ENCODE measurements at regions of chr1 and their contacts with region 1.

Region 1: GRCh38 chr1:43529206-43529731 is 1.4 kb upstream of the PTPRF start:
- DNase-seq: peak; percentile 75
- H3K4me3 ChIP-seq: no peak overlapping the region
- H3K27ac ChIP-seq: no peak overlapping the region
- H3K4me1 ChIP-seq: peaks cover 24% of the 10 kb centered on the region
- H3K27me3 ChIP-seq: no peaks in the 10 kb centered on the region
- CTCF ChIP-seq: peak; percentile 93 to 98

Region 2: GRCh38 chr1:43454266-43455011 is 74.8 kb before region 1 on chr1:
- CTCF ChIA-PET with region 1: no interaction called
- dilution Hi-C with region 1: no loop called
- in situ Hi-C with region 1: no loop called
- intact Hi-C with region 1: loop called (anchors 2 kb)
- DNase-seq: peak; percentile 26
- H3K4me3 ChIP-seq: peak overlapping the region; percentile 49 to 54 (median 50)
- H3K27ac ChIP-seq: peak overlapping the region; percentile 48
- H3K4me1 ChIP-seq: peaks cover 20% of the 10 kb centered on the region
- H3K27me3 ChIP-seq: no peaks in the 10 kb centered on the region
- CTCF ChIP-seq: peak in 1 of 2 donors; percentile 2

Region 3: GRCh38 chr1:43582162-43582589 is 52.9 kb after region 1 on chr1:
- CTCF ChIA-PET with region 1: no interaction called
- dilution Hi-C with region 1: no loop called
- in situ Hi-C with region 1: no loop called
- intact Hi-C with region 1: loop called (anchors 2 kb)
- DNase-seq: peak; percentile 99
- H3K4me3 ChIP-seq: no peak overlapping the region
- H3K27ac ChIP-seq: peak overlapping the region; percentile 66
- H3K4me1 ChIP-seq: peaks cover 52% of the 10 kb centered on the region
- H3K27me3 ChIP-seq: no peaks in the 10 kb centered on the region
- CTCF ChIP-seq: no peak

Region 4: DNA sequence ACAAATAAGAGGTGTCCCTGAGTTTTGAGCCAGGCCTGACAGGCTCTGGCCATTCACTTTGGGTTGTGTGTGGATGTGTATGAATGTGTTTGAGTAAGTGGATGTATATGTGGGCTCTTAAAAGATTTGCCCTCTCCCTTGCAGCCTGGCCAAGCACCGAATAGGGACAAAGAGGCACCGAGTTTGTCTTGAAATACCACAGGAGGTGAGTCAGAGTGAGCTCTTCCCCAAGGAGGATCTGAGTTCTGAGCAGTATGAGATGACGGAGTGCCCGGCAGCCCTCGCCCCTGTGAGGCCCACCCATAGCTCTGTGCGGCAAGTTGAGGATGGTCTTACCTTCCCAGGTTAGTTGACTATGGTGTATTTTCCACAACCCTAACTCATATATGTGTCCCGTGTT is 139.7 kb after region 1 on chr1:
- CTCF ChIA-PET with region 1: no interaction called
- dilution Hi-C with region 1: no loop called
- in situ Hi-C with region 1: loop called in 1 of 2 experiments (anchors 10 kb)
- intact Hi-C with region 1: loop called (anchors 1 kb)
- DNase-seq: peak; percentile 65
- H3K4me3 ChIP-seq: no peak overlapping the region
- H3K27ac ChIP-seq: peak overlapping the region; percentile 21
- H3K4me1 ChIP-seq: peaks cover 45% of the 10 kb centered on the region
- H3K27me3 ChIP-seq: no peaks in the 10 kb centered on the region
- CTCF ChIP-seq: no peak

Region 5: GRCh38 chr1:43946236-43947060 is 417.2 kb after region 1 on chr1 and contains the start of gene IPO13:
- CTCF ChIA-PET with region 1: no interaction called
- dilution Hi-C with region 1: loop called (anchors 25 kb)
- in situ Hi-C with region 1: loop called in 1 of 2 experiments (anchors 25 kb)
- intact Hi-C with region 1: loop called (anchors 1 kb)
- DNase-seq: peak; percentile 96
- H3K4me3 ChIP-seq: peak within 1 kb of the TSS; percentile 89 to 97 (median 96)
- H3K27ac ChIP-seq: peak within 1 kb of the TSS; percentile 84
- H3K4me1 ChIP-seq: peaks cover 19% of the 10 kb centered on the region
- H3K27me3 ChIP-seq: no peaks in the 10 kb centered on the region
- CTCF ChIP-seq: peak; percentile 35 to 82
- total RNA-seq, gene IPO13: 35.5 to 53.0 TPM

Measured in mammary epithelial cell (primary cell).